WTC11 (cell line): ENCODE measurements at regions of chr11 and their contacts with region 1.

Region 1: GRCh38 chr11:518463-519250 is 11.6 kb upstream of the RNH1 start:
- DNase-seq: peak; percentile 82
- ATAC-seq: peak; percentile 97
- H3K4me3 Mint-ChIP-seq: peak overlapping the region; percentile 60
- H3K27ac Mint-ChIP-seq: 0 out of 2 replicates have a peak overlapping the region, but pooled peaks have one; percentile 70
- H3K4me1 Mint-ChIP-seq: no peaks in the 10 kb centered on the region; the same call in 1 of the 2 replicates
- H3K27me3 Mint-ChIP-seq: peaks cover 7% of the 10 kb centered on the region
- CTCF ChIP-seq: peak; percentile 98

Region 2: DNA sequence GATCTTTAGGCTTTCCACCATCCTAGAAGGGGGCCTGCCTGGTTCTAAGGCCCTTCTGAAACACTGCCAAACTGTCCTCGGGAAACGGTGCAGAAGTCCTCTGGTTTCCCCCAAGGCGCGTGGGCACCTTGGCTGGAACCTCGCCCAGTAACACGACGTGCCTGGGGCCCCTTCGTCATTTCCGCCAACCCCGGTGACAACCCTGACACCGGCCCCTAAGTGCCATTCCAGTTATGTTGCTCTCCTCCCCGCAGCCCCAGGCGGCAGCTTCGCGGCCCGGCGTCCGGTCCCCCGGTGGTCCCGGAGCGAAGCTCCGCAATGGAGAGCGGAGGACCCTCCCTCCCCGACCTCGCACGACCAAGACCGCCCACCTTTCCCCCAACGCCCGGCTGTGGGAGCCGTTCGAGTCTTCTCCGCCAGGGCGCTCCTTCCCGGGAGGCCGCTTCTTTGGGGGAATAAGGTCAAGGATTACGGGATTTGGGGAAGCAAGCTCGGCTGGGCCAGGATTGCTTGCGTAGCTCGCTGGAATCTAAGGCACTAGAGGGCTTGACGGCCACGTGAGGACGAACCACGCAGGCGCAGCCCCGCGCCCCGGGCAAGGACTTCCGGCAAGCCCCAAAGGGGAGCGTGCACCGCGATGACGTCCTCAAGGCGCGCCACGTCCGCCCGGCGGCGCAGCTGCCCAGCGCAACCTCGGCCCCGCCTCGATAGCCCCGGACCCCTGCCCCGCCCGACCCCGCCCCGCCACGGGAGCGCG is 12.2 kb before region 1 on chr11:
- CTCF ChIA-PET with region 1: interaction called, 17 read pairs
- POLR2A ChIA-PET with region 1: interaction called, 3 read pairs
- DNase-seq: peak; percentile 98
- ATAC-seq: peak; percentile 75
- H3K4me3 Mint-ChIP-seq: peak overlapping the region; percentile 93
- H3K27ac Mint-ChIP-seq: peak overlapping the region; percentile 99
- H3K4me1 Mint-ChIP-seq: peaks cover 12% of the 10 kb centered on the region
- H3K27me3 Mint-ChIP-seq: no peaks in the 10 kb centered on the region; the same call in 1 of the 2 replicates
- CTCF ChIP-seq: no peak

Region 3: DNA sequence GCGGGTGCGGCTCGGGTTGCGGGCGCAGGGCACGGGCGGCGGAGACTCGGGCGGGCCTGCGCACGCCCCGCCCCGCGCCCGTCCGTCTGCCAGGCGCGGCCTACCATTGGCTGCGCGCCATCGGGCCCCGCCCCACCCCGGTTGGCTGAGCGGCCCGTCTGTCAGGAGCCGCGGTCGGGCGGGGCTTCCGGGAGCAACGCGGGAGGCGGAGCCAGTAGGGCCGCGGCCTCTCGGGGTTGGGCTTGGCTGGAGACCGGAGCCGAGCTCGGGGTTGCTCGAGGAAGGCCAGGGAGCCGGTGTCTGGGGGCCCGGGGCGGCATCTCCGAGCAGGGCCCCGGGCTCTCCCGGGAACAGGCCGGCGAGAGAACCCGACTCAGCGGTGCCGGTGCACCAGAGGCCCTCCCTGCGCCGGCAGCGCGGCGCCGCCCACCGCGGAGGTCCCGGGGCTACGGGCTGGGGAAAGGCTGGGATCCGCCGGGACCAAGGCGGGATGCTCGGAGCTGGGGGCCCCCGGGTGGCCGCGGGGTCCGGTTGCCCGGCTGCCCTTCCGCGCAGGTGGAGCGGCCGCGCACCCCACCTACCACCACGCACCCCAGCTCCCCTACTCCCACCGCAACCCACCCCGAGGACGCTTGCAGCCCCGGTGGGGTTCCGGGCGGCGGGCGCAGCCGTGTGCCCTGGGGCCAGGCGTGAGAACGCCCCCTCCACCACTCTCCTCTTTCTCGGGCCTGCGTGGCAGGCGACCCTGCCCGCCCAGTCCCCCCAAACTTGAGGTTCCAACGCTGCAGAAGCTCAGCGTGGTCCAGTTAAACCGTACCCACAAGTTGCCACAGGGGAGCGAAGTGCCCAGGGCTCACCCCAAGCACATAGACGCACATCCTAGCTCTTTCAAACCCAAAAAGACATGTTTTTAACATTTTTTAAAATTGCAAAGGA is 17.1 kb after region 1 on chr11 and contains the start of gene HRAS:
- CTCF ChIA-PET with region 1: interaction called, 22 read pairs
- POLR2A ChIA-PET with region 1: no interaction called
- DNase-seq: peak; percentile 95
- ATAC-seq: peak; percentile 92
- H3K4me3 Mint-ChIP-seq: peak within 1 kb of the TSS; percentile 87
- H3K27ac Mint-ChIP-seq: no peak within 1 kb of the TSS; the same call in 1 of the 2 replicates
- H3K4me1 Mint-ChIP-seq: no peaks in the 10 kb centered on the region
- H3K27me3 Mint-ChIP-seq: peaks cover 22% of the 10 kb centered on the region
- CTCF ChIP-seq: no peak
- total RNA-seq, gene HRAS: 42.9 to 62.4 TPM (median 48.3 TPM) in 3 replicates